GM13977 (cell line): ENCODE measurements at regions of chr7 and their contacts with region 1.

Region 1: GRCh38 chr7:120805636-120806388 is 52.1 kb downstream of the TSPAN12 start:
- DNase-seq: peak; percentile 50
- CTCF ChIP-seq: peak; percentile 77

Region 2: DNA sequence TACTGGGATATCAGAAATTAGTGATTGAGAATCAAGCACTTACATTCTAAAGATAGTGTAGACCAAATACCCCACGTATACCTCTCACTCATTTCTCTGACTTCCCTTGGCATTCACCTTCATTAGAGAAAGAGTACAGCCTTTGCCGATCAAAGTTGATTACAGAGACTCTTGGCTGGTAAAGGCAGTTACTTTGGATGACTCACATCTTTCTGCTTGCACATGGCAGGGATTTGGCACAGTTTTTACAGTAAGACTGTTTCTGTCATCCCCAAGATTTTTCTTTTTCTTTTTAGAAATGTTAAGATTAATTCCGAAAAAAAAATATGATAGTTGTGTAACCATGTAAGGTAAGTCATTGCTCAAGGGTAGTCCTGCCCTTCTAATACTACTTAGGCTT is 90.9 kb before region 1 on chr7:
- in situ Hi-C with region 1: no loop called
- DNase-seq: no peak
- CTCF ChIP-seq: no peak

Region 3: DNA sequence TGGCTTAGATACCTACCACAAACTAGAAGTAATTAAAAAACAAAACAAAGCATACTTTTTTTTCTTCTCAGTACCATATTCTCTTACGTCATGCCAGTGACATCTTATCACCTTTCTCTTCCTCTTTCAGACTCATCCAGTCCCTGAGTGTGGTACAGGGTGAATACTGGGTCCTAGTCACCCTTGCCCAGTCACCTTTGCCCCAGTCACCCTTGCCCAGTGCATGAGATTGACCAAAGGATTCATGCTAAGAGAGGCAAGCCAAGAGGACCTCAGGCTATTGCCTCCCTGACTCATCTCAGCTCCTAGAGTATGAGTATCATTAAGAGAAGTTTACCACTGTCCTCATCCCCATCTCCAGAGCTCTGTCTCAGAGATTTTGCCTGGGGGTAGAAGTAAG is 62.1 kb after region 1 on chr7:
- in situ Hi-C with region 1: loop called (anchors 10 kb)
- DNase-seq: no peak
- CTCF ChIP-seq: no peak

Region 4: DNA sequence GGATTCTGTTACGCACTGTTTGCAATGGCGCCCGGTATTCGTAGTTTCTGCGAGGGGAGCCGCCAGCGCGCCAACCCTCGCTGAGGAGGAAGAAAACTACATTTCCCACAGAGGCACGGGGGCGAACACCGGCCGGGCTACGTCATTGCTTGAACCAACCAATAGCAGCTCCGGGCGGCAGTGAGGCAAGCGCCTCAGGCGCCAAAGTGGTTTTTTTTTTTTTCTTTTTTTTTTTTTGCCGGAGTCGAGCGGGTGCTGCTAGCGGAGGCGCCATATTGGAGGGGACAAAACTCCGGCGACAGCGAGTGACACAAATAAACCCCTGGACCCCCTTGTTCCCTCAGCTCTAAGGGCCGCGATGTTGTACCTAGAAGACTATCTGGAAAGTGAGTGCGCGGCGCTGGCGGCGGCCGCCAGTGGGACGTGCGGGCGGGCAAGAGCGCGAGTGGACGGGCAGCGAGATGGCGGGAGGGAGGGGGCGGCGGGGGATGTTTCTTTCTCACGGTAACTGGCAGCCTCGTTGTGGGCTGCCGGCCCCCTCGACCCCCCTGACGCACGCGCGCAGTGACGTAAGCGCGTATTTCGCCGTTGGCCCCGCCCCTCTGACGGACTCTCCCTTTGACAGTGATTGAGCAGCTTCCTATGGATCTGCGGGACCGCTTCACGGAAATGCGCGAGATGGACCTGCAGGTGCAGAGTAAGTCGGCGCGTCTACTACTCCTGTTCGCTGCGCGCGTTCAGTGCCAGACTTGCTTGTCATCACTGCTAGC is 144.9 kb after region 1 on chr7 and contains the start of gene ING3:
- in situ Hi-C with region 1: no loop called
- DNase-seq: peak; percentile 86
- CTCF ChIP-seq: no peak

Region 5: DNA sequence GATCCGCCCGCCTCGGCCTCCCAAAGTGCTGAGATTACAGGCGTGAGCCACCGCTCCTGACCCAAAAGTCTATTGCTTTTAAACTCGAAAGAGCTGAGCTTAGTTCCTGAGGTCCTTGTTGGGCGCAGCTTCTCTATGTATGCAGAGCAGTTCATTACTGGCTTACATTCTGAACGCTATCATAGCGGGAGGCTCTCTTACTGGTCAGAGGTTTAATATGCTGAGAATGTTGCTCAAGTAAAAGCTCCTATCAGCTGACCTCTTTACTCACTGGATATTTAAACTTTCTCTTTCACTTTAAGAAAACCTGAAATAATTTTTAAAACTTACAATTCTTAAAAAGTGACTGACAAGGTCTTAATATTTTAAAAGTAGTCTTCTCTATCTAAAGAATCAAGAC is 362.2 kb after region 1 on chr7:
- in situ Hi-C with region 1: no loop called
- DNase-seq: no peak
- CTCF ChIP-seq: no peak